ENCODE measurements at regions of chr15 and their contacts with region 1.

Region 1: GRCh38 chr15:56918046-56918938 is at the start of gene TCF12:
- DNase-seq: peak; percentile 86 to 87
- ATAC-seq: peak; percentile 84
- H3K4me3 ChIP-seq: peak within 1 kb of the TSS; percentile 83 to 91 (median 87)
- H3K27ac ChIP-seq: peak within 1 kb of the TSS; percentile 90 to 94 (median 92)
- H3K4me1 ChIP-seq: peaks cover 40 to 44% of the 10 kb centered on the region in 2 donors
- H3K27me3 ChIP-seq: no peaks in the 10 kb centered on the region
- CTCF ChIP-seq: peak in 4 of 5 experiments; percentile 34 to 57 (median 51)
- POLR2A ChIP-seq: peak; percentile 56 to 81
- total RNA-seq, gene TCF12: 34.9 to 63.0 (median 51.4) TPM

Region 2: GRCh38 chr15:56732921-56733797 is 185.1 kb before region 1 on chr15 and contains the start of gene ZNF280D:
- in situ Hi-C with region 1: no loop called
- intact Hi-C with region 1: loop called (anchors 1 kb)
- DNase-seq: peak; percentile 82 to 90
- ATAC-seq: peak; percentile 82 to 88
- H3K4me3 ChIP-seq: peak within 1 kb of the TSS; percentile 65 to 76 (median 67)
- H3K27ac ChIP-seq: peak within 1 kb of the TSS; percentile 86 to 97 (median 92)
- H3K4me1 ChIP-seq: peaks cover 37 to 47% of the 10 kb centered on the region in 2 donors
- H3K27me3 ChIP-seq: no peaks in the 10 kb centered on the region
- CTCF ChIP-seq: peak in 1 of 5 experiments; percentile 8
- POLR2A ChIP-seq: peak; percentile 55 to 65
- total RNA-seq, gene ZNF280D: 19.9 to 45.5 (median 23.4) TPM

Region 3: DNA sequence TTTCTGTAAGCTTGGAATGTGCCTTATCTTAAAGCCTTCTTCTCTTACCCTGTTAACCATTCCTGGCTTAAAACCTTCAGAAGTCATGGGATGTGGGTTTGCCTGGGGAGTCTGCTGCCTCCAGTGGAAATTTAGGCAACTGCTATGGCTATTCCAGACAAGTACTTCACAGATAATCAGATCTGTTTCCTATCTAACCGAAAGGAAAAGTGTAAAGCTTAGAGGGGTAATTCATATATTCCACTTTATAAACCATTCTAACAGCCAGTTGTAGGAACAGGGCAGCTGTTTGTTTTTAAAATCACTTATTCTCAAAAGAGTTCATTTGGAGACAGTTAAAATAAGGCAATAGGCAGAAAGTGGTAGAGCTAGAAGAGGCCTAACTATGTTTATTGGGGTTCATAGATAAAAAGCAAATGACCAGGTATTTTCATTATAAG is 220.1 kb after region 1 on chr15:
- in situ Hi-C with region 1: loop called in 3 of 4 experiments (anchors 25 kb)
- intact Hi-C with region 1: loop called (anchors 2 kb)
- DNase-seq: no peak
- ATAC-seq: peak; percentile 47 to 72
- H3K4me3 ChIP-seq: no peak overlapping the region
- H3K27ac ChIP-seq: no peak overlapping the region
- H3K4me1 ChIP-seq: peaks cover 22 to 25% of the 10 kb centered on the region in 2 donors
- H3K27me3 ChIP-seq: no peaks in the 10 kb centered on the region
- CTCF ChIP-seq: peak; percentile 43 to 75 (median 63)
- POLR2A ChIP-seq: no peak

Region 4: DNA sequence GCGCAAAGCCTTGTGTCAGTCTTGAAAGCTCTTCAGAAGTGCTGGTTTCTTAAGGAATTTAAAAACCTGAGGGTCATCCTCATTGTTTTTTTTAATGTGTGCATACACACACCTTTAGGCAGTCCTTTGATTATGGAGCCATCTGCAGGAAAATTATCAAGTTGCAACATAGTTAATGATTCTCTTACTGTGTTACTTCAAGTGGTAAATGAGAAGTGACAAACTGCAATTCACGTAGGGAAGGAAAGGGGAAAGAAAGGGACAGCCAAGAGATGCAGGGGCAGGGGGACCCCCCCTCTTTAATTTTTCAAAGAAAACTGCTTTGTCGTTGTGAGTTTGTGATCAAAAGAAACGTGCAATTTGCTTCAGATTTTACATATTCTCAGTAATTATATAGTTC is 295.6 kb after region 1 on chr15:
- in situ Hi-C with region 1: loop called in 1 of 4 experiments (anchors 10 kb)
- intact Hi-C with region 1: loop called (anchors 5 kb)
- DNase-seq: no peak
- ATAC-seq: peak; percentile 66 to 75
- H3K4me3 ChIP-seq: no peak overlapping the region
- H3K27ac ChIP-seq: peak overlapping the region in 3 of 4 donors; percentile 8 to 45 (median 14)
- H3K4me1 ChIP-seq: peaks cover 62 to 72% of the 10 kb centered on the region in 2 donors
- H3K27me3 ChIP-seq: no peaks in the 10 kb centered on the region
- CTCF ChIP-seq: peak; percentile 20 to 64 (median 34)
- POLR2A ChIP-seq: no peak

Region 5: GRCh38 chr15:57306161-57306943 is 388.1 kb after region 1 on chr15:
- in situ Hi-C with region 1: loop called in 2 of 4 experiments (anchors 10 to 25 kb)
- intact Hi-C with region 1: loop called (anchors 1 kb)
- DNase-seq: peak; percentile 58 to 73
- ATAC-seq: peak; percentile 73 to 92
- H3K4me3 ChIP-seq: peak overlapping the region; percentile 65 to 75 (median 72)
- H3K27ac ChIP-seq: peak overlapping the region in 1 of 4 donors; percentile 37
- H3K4me1 ChIP-seq: peaks cover 5 to 14% of the 10 kb centered on the region in 2 donors
- H3K27me3 ChIP-seq: no peaks in the 10 kb centered on the region
- CTCF ChIP-seq: peak; percentile 83 to 93 (median 90)
- POLR2A ChIP-seq: no peak